ENCODE measurements at regions of chr16 and their contacts with region 1.

Region 1: DNA sequence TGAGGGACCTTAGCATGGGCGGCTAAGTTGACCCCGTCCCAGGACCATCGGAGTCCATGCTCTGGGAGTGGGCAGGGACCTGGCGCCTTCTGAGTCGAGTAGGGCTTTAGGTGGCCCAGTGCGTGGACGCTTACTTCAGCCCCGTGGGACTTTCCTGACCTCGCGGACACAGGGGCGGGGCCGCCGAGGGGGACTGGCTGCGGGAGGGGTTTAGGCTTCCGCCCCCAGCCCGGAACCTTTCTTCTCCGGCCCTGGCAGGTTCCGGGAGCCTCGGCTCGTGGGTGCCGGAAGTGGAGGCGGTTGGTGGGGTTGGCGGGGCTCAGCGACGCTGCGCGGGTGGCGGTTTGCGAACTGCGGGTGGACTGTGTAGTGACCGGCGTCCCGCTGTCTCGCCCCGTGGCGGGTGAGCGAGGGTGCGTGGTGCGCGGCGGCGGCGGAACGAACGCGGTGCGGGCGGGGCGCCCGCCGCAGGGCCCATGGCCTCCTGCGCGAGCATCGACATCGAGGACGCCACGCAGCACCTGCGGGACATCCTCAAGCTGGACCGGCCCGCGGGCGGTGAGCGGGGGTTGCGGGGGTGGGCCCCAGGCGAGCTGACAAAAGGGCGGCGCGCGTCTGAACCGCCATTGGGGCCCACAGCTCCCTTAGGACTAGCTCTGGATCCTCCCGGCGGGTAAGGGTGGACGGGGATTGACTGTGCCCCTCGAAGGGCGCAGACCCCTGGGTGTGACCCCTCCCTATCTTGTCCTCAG is at the start of gene EDC4:
- H3K4me3 Mint-ChIP-seq: peak within 1 kb of the TSS; percentile 90
- H3K27ac Mint-ChIP-seq: peak within 1 kb of the TSS; percentile 86
- H3K4me1 Mint-ChIP-seq: peaks cover 65% of the 10 kb centered on the region
- H3K27me3 Mint-ChIP-seq: no peaks in the 10 kb centered on the region

Region 2: GRCh38 chr16:67841764-67842508 is 31.0 kb before region 1 on chr16 and contains the start of gene THAP11:
- intact Hi-C with region 1: loop called (anchors 2 kb)
- H3K4me3 Mint-ChIP-seq: peak within 1 kb of the TSS; percentile 97
- H3K27ac Mint-ChIP-seq: peak within 1 kb of the TSS; percentile 97
- H3K4me1 Mint-ChIP-seq: peaks cover 36% of the 10 kb centered on the region
- H3K27me3 Mint-ChIP-seq: no peaks in the 10 kb centered on the region

Region 3: DNA sequence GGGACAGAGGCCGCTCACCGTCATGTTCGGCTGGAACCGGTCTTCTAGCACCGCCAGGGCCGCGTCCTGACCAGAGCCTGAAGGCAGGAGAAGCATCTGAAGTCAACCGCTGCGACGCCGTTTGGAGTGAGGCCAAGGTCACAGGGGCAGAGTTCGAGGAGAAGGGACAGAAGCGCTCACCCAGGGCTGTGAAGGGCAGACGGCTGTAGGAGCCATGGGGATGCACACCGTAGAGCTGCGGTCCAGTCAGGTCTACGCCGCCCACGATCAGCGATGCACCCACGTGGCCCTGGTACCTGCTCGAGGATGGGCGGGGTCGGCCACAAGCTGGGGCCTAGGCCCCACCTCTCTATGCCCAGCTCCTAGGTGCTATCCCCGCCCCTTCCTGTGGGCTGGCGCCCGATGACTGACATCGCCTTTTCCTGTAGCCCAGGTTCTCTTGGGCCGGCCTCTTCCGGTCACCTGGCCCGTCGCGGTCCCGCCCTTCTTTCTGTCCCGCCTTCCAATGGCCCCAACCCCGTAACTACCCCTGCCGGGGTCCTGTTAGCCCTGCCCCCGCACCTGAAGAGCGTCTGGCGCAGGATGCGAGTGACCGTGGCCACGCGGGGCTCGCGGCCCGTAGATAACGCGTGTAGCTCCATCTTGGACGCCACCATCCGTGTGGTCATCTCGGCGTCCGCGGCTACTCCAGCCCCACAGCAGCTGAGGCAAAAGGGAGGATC is 62.6 kb after region 1 on chr16:
- intact Hi-C with region 1: loop called (anchors 10 kb)
- H3K4me3 Mint-ChIP-seq: peak overlapping the region; percentile 83
- H3K27ac Mint-ChIP-seq: peak overlapping the region; percentile 91
- H3K4me1 Mint-ChIP-seq: peaks cover 37% of the 10 kb centered on the region
- H3K27me3 Mint-ChIP-seq: no peaks in the 10 kb centered on the region